Caco-2 (cell line): ENCODE measurements at regions of chr3 and their contacts with region 1.

Region 1: GRCh38 chr3:164208821-164209220 is 869.5 kb downstream of the SI start:
- DNase-seq: no peak
- H3K4me3 ChIP-seq: no peak overlapping the region
- H3K4me3 Mint-ChIP-seq: no peak overlapping the region
- H3K27ac Mint-ChIP-seq: no peak overlapping the region
- H3K4me1 ChIP-seq: no peaks in the 10 kb centered on the region
- H3K4me1 Mint-ChIP-seq: no peaks in the 10 kb centered on the region
- H3K27me3 ChIP-seq: no peaks in the 10 kb centered on the region
- H3K27me3 Mint-ChIP-seq: no peaks in the 10 kb centered on the region
- CTCF ChIP-seq: peak in 1 of 2 experiments; percentile 3

Region 2: GRCh38 chr3:164332831-164333802 is 124.3 kb after region 1 on chr3:
- CTCF ChIA-PET with region 1: no interaction called
- POLR2A ChIA-PET with region 1: no interaction called
- intact Hi-C with region 1: loop called (anchors 10 kb)
- DNase-seq: peak; percentile 39
- H3K4me3 ChIP-seq: no peak overlapping the region
- H3K4me3 Mint-ChIP-seq: peak overlapping the region; percentile 40
- H3K27ac Mint-ChIP-seq: peak overlapping the region; percentile 86
- H3K4me1 ChIP-seq: peaks cover 46% of the 10 kb centered on the region
- H3K4me1 Mint-ChIP-seq: peaks cover 20% of the 10 kb centered on the region
- H3K27me3 ChIP-seq: no peaks in the 10 kb centered on the region
- H3K27me3 Mint-ChIP-seq: no peaks in the 10 kb centered on the region
- CTCF ChIP-seq: no peak